ENCODE measurements at regions of chr15 and their contacts with region 1.

Region 1: GRCh38 chr15:41401904-41402267 is 410 bp downstream of the NDUFAF1 start:
- DNase-seq: peak in 1 of 14 experiments; percentile 9
- ATAC-seq: no peak
- H3K4me3 ChIP-seq: peak overlapping the region; percentile 93
- H3K4me3 Mint-ChIP-seq: peak overlapping the region; percentile 98
- H3K27ac ChIP-seq: peak overlapping the region; percentile 66 to 83
- H3K27ac Mint-ChIP-seq: peak overlapping the region; percentile 97
- H3K4me1 ChIP-seq: peaks cover 15% of the 10 kb centered on the region
- H3K4me1 Mint-ChIP-seq: peaks cover 21% of the 10 kb centered on the region
- H3K27me3 ChIP-seq: no peaks in the 10 kb centered on the region
- H3K27me3 Mint-ChIP-seq: no peaks in the 10 kb centered on the region
- CTCF ChIP-seq: no peak

Region 2: GRCh38 chr15:40382580-40383456 is 1019.1 kb before region 1 on chr15 and contains the start of gene KNSTRN:
- CTCF ChIA-PET with region 1: no interaction called
- POLR2A ChIA-PET with region 1: no interaction called
- intact Hi-C with region 1: loop called in 1 of 2 experiments (anchors 5 kb)
- DNase-seq: peak; percentile 86 to 96 (median 90)
- ATAC-seq: peak; percentile 98
- H3K4me3 ChIP-seq: peak within 1 kb of the TSS; percentile 69
- H3K4me3 Mint-ChIP-seq: peak within 1 kb of the TSS; percentile 94
- H3K27ac ChIP-seq: no peak within 1 kb of the TSS
- H3K27ac Mint-ChIP-seq: no peak within 1 kb of the TSS
- H3K4me1 ChIP-seq: peaks cover 15% of the 10 kb centered on the region
- H3K4me1 Mint-ChIP-seq: peaks cover 15% of the 10 kb centered on the region
- H3K27me3 ChIP-seq: no peaks in the 10 kb centered on the region
- H3K27me3 Mint-ChIP-seq: no peaks in the 10 kb centered on the region
- CTCF ChIP-seq: no peak
- total RNA-seq, gene KNSTRN: 2.8 to 3.0 TPM

Region 3: DNA sequence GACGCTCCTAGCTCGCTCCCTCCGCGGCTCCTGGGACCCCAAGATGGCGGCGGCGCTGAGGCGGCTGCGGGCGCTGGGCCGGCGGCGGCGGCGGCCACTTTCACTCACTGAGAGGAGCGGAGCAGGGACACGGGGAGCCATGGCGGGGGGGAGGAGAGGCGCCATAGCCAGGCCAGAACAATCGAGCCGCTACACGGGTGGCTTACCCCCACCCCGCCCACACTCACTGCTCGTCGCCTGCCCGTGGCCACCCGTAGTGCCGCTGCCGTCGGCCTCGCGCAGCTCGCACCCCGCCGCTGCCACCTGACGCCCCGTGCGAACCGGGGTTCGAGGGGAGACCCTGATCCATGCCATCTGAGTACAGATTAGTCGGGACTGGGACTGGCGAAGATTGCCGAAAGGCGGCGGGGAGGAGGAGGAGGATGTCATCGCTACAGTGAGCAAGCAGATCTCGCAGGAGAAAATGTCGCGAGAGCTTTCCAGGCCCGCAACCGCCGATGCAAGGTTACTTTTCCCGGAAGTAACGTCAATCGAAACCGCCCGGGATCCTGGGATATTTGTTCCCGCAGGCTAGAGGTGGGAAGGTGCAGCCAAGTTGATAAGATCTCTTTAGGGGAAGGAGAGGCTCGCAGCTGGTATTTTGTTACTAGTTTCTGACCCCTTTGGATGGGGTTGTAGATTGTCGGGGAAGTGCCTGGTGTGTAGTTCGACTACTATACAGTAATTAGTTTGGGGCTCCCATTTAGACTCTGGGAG is 285.6 kb before region 1 on chr15 and contains the start of gene INO80:
- CTCF ChIA-PET with region 1: no interaction called
- POLR2A ChIA-PET with region 1: no interaction called
- intact Hi-C with region 1: loop called in 1 of 2 experiments (anchors 5 kb)
- DNase-seq: peak; percentile 90 to 98 (median 95)
- ATAC-seq: peak; percentile 79
- H3K4me3 ChIP-seq: peak within 1 kb of the TSS; percentile 99
- H3K4me3 Mint-ChIP-seq: peak within 1 kb of the TSS; percentile 93
- H3K27ac ChIP-seq: peak within 1 kb of the TSS; percentile 79 to 91
- H3K27ac Mint-ChIP-seq: peak within 1 kb of the TSS; percentile 98
- H3K4me1 ChIP-seq: peaks cover 20% of the 10 kb centered on the region
- H3K4me1 Mint-ChIP-seq: peaks cover 25% of the 10 kb centered on the region
- H3K27me3 ChIP-seq: no peaks in the 10 kb centered on the region
- H3K27me3 Mint-ChIP-seq: no peaks in the 10 kb centered on the region
- CTCF ChIP-seq: no peak
- total RNA-seq, gene INO80: 20.3 to 22.9 TPM

Region 4: GRCh38 chr15:41283653-41284426 is 118.0 kb before region 1 on chr15:
- CTCF ChIA-PET with region 1: no interaction called
- POLR2A ChIA-PET with region 1: interaction called, 4 read pairs
- intact Hi-C with region 1: loop called in 1 of 2 experiments (anchors 2 kb)
- DNase-seq: peak; percentile 94 to 99 (median 97)
- ATAC-seq: peak; percentile 96
- H3K4me3 ChIP-seq: peak overlapping the region; percentile 80
- H3K4me3 Mint-ChIP-seq: peak overlapping the region; percentile 91
- H3K27ac ChIP-seq: peak overlapping the region; percentile 83 to 86
- H3K27ac Mint-ChIP-seq: peak overlapping the region; percentile 91
- H3K4me1 ChIP-seq: peaks cover 29% of the 10 kb centered on the region
- H3K4me1 Mint-ChIP-seq: peaks cover 50% of the 10 kb centered on the region
- H3K27me3 ChIP-seq: no peaks in the 10 kb centered on the region
- H3K27me3 Mint-ChIP-seq: no peaks in the 10 kb centered on the region
- CTCF ChIP-seq: no peak

Region 5: GRCh38 chr15:41416742-41417406 is 15.0 kb after region 1 on chr15 and contains the start of gene RTF1:
- CTCF ChIA-PET with region 1: no interaction called
- POLR2A ChIA-PET with region 1: interaction called, 3 read pairs
- intact Hi-C with region 1: loop called in 1 of 2 experiments (anchors 1 kb)
- DNase-seq: peak; percentile 91 to 99 (median 97)
- ATAC-seq: peak; percentile 96
- H3K4me3 ChIP-seq: peak within 1 kb of the TSS; percentile 97
- H3K4me3 Mint-ChIP-seq: peak within 1 kb of the TSS; percentile 90
- H3K27ac ChIP-seq: peak within 1 kb of the TSS; percentile 48 to 72
- H3K27ac Mint-ChIP-seq: peak within 1 kb of the TSS; percentile 92
- H3K4me1 ChIP-seq: peaks cover 30% of the 10 kb centered on the region
- H3K4me1 Mint-ChIP-seq: peaks cover 47% of the 10 kb centered on the region
- H3K27me3 ChIP-seq: no peaks in the 10 kb centered on the region
- H3K27me3 Mint-ChIP-seq: no peaks in the 10 kb centered on the region
- CTCF ChIP-seq: no peak
- total RNA-seq, gene RTF1: 29.9 to 34.2 TPM

Region 6: DNA sequence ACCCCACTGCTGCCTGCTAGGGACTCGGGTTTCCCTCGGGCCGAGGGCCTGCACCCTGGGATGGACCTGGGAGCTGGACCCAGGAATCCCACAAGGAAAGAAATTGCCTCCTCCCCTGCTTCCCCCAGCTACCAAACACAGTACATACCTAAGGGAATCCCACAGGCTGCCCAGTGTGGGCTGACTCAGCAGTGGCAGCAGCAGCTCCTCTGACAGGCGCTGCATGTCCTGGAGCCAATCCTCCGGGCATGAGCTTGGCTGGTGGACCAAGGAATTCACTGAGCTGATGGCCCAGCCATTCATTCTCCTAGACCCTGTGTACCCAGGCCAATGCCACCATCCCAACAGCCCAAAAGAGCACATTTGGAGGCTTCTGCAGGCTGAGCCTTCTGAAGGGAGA is 121.2 kb after region 1 on chr15:
- CTCF ChIA-PET with region 1: no interaction called
- POLR2A ChIA-PET with region 1: no interaction called
- intact Hi-C with region 1: no loop called
- DNase-seq: no peak
- ATAC-seq: no peak
- H3K4me3 ChIP-seq: no peak overlapping the region
- H3K4me3 Mint-ChIP-seq: no peak overlapping the region
- H3K27ac ChIP-seq: no peak overlapping the region
- H3K27ac Mint-ChIP-seq: no peak overlapping the region
- H3K4me1 ChIP-seq: no peaks in the 10 kb centered on the region
- H3K4me1 Mint-ChIP-seq: no peaks in the 10 kb centered on the region
- H3K27me3 ChIP-seq: no peaks in the 10 kb centered on the region
- H3K27me3 Mint-ChIP-seq: no peaks in the 10 kb centered on the region
- CTCF ChIP-seq: no peak

Region 7: GRCh38 chr15:41660235-41661077 is 258.6 kb after region 1 on chr15 and contains the start of gene MGA:
- CTCF ChIA-PET with region 1: no interaction called
- POLR2A ChIA-PET with region 1: no interaction called
- intact Hi-C with region 1: loop called in 1 of 2 experiments (anchors 10 kb)
- DNase-seq: peak; percentile 77 to 96 (median 89)
- ATAC-seq: peak; percentile 79
- H3K4me3 ChIP-seq: peak within 1 kb of the TSS; percentile 65
- H3K4me3 Mint-ChIP-seq: peak within 1 kb of the TSS; percentile 83
- H3K27ac ChIP-seq: peak within 1 kb of the TSS; percentile 81 to 91
- H3K27ac Mint-ChIP-seq: peak within 1 kb of the TSS; percentile 89
- H3K4me1 ChIP-seq: peaks cover 32% of the 10 kb centered on the region
- H3K4me1 Mint-ChIP-seq: peaks cover 66% of the 10 kb centered on the region
- H3K27me3 ChIP-seq: no peaks in the 10 kb centered on the region
- H3K27me3 Mint-ChIP-seq: no peaks in the 10 kb centered on the region
- CTCF ChIP-seq: no peak
- total RNA-seq, gene MGA: 31.0 to 33.9 TPM